ENCODE measurements at regions of chr11 and their contacts with region 1.

Region 1: DNA sequence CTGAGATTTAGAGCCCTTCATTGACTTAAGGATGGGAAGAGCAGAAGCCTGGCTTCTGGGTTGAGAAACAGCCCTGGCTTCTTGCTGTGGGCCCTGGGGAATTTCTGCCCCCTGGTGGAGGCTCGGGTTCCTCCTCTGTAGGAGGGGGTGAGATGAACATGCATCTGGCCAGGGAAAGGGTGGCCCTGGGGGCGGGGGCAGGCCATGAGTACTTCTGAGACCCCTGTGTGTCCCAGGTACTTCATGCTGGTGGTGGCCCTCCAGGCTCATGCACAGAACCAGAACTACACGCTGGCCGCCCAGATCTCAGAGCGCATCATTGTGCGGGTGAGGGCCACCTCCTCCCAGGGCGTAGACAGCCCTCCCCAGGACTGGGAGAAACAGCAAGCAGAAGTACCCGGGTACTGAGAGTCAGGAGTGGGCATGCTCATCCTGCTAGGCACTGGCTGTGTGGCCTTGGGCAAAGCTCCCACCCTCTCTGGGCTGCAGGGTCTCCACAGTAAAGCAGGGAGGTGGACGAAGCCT is 15.8 kb downstream of the TMEM258 start:
- DNase-seq: peak in 8 of 9 donors; percentile 27 to 71 (median 37)
- ATAC-seq: peak; percentile 66
- H3K4me3 ChIP-seq: peak overlapping the region; percentile 44
- H3K4me3 Mint-ChIP-seq: peak overlapping the region in 9 of 10 donors; percentile 34 to 77 (median 68)
- H3K27ac ChIP-seq: no peak overlapping the region
- H3K27ac Mint-ChIP-seq: peak overlapping the region in 2 of 9 donors; percentile 43 to 80
- H3K4me1 ChIP-seq: peaks cover 4 to 11% of the 10 kb centered on the region in 2 donors
- H3K4me1 Mint-ChIP-seq: peaks cover 5 to 21% (median 10%) of the 10 kb centered on the region in 7 donors
- H3K27me3 ChIP-seq: no peaks in the 10 kb centered on the region
- H3K27me3 Mint-ChIP-seq: peaks cover 0 to 6% (median 0%) of the 10 kb centered on the region in 5 donors

Region 2: GRCh38 chr11:61309739-61310138 is 466.9 kb before region 1 on chr11:
- CTCF ChIA-PET with region 1: no interaction called
- POLR2A ChIA-PET with region 1: no interaction called
- intact Hi-C with region 1: no loop called
- DNase-seq: no peak
- ATAC-seq: no peak
- H3K4me3 ChIP-seq: no peak overlapping the region
- H3K4me3 Mint-ChIP-seq: no peak overlapping the region
- H3K27ac ChIP-seq: no peak overlapping the region
- H3K27ac Mint-ChIP-seq: no peak overlapping the region
- H3K4me1 ChIP-seq: no peaks in the 10 kb centered on the region
- H3K4me1 Mint-ChIP-seq: peaks cover 0 to 2% (median 0%) of the 10 kb centered on the region in 7 donors
- H3K27me3 ChIP-seq: no peaks in the 10 kb centered on the region
- H3K27me3 Mint-ChIP-seq: no peaks in the 10 kb centered on the region

Region 3: GRCh38 chr11:61679893-61680621 is 96.6 kb before region 1 on chr11 and contains the start of gene DAGLA:
- CTCF ChIA-PET with region 1: no interaction called
- POLR2A ChIA-PET with region 1: no interaction called
- intact Hi-C with region 1: no loop called
- DNase-seq: peak; percentile 60 to 91 (median 74)
- ATAC-seq: peak; percentile 89
- H3K4me3 ChIP-seq: no peak within 1 kb of the TSS
- H3K4me3 Mint-ChIP-seq: peak within 1 kb of the TSS in 9 of 10 donors; percentile 38 to 77 (median 67)
- H3K27ac ChIP-seq: no peak within 1 kb of the TSS
- H3K27ac Mint-ChIP-seq: peak within 1 kb of the TSS in 4 of 9 donors; percentile 43 to 65 (median 55)
- H3K4me1 ChIP-seq: peaks cover 14 to 16% of the 10 kb centered on the region in 2 donors
- H3K4me1 Mint-ChIP-seq: peaks cover 0 to 9% (median 5%) of the 10 kb centered on the region in 7 donors
- H3K27me3 ChIP-seq: peaks cover 0 to 3% of the 10 kb centered on the region in 2 donors
- H3K27me3 Mint-ChIP-seq: peaks cover 2 to 27% (median 21%) of the 10 kb centered on the region in 5 donors
- total RNA-seq, gene DAGLA: 0.15 to 2.1 (median 0.35) TPM

Region 4: GRCh38 chr11:61747192-61747966 is 29.2 kb before region 1 on chr11:
- CTCF ChIA-PET with region 1: no interaction called
- POLR2A ChIA-PET with region 1: no interaction called
- intact Hi-C with region 1: loop called (anchors 1 to 2 kb)
- DNase-seq: peak in 5 of 9 donors; percentile 13 to 67 (median 18)
- ATAC-seq: peak; percentile 65
- H3K4me3 ChIP-seq: no peak overlapping the region
- H3K4me3 Mint-ChIP-seq: no peak overlapping the region
- H3K27ac ChIP-seq: no peak overlapping the region
- H3K27ac Mint-ChIP-seq: no peak overlapping the region
- H3K4me1 ChIP-seq: no peaks in the 10 kb centered on the region
- H3K4me1 Mint-ChIP-seq: peaks cover 0 to 10% (median 6%) of the 10 kb centered on the region in 7 donors
- H3K27me3 ChIP-seq: peaks cover 0 to 3% of the 10 kb centered on the region in 2 donors
- H3K27me3 Mint-ChIP-seq: peaks cover 17 to 22% (median 20%) of the 10 kb centered on the region in 5 donors

Region 5: DNA sequence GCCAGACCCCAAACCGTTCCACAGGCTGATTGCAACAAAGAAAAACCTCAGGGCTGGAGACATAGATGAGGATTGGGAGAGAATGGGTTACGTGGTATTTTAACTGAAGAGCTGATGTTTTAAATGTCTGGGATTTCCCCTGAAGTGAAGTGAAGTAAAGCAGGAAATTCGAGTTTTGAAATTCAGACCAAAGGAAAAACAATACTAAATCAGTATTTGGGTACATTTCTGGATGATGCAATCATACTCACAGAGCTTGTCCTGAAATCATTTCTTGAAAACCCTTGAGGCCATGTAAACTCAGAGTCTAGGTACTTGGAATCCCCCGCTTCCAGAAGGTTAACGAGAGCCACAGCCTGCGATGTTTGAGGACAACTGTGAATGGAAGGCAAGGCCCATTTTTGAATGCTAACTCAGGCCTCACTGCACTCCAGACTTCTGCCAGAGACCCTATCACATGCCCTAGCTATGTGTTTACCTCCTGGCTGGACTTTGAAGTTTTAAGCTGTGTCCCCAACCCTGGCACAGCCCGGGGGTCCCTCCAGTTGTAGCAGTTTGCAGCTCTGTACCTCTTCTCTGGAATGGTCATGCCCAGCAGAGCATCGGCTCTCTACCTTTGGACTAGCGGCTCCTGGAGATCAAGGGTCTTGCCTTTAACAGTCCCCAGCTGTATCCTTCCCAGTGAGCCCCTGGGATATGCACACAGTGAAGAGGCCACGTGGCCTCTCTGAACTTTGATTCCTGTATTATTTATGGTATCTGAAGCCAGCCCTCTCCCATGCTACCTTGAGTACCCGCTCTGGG is 196.3 kb after region 1 on chr11:
- CTCF ChIA-PET with region 1: no interaction called
- POLR2A ChIA-PET with region 1: no interaction called
- intact Hi-C with region 1: no loop called
- DNase-seq: peak in 3 of 9 donors; percentile 24 to 52 (median 28)
- ATAC-seq: peak; percentile 33
- H3K4me3 ChIP-seq: no peak overlapping the region
- H3K4me3 Mint-ChIP-seq: peak overlapping the region in 5 of 10 donors; percentile 21 to 70 (median 38)
- H3K27ac ChIP-seq: peak overlapping the region; percentile 57
- H3K27ac Mint-ChIP-seq: peak overlapping the region; percentile 17 to 89 (median 80)
- H3K4me1 ChIP-seq: peaks cover 0 to 18% of the 10 kb centered on the region in 2 donors
- H3K4me1 Mint-ChIP-seq: peaks cover 25 to 54% (median 44%) of the 10 kb centered on the region in 7 donors
- H3K27me3 ChIP-seq: no peaks in the 10 kb centered on the region
- H3K27me3 Mint-ChIP-seq: no peaks in the 10 kb centered on the region

Region 6: DNA sequence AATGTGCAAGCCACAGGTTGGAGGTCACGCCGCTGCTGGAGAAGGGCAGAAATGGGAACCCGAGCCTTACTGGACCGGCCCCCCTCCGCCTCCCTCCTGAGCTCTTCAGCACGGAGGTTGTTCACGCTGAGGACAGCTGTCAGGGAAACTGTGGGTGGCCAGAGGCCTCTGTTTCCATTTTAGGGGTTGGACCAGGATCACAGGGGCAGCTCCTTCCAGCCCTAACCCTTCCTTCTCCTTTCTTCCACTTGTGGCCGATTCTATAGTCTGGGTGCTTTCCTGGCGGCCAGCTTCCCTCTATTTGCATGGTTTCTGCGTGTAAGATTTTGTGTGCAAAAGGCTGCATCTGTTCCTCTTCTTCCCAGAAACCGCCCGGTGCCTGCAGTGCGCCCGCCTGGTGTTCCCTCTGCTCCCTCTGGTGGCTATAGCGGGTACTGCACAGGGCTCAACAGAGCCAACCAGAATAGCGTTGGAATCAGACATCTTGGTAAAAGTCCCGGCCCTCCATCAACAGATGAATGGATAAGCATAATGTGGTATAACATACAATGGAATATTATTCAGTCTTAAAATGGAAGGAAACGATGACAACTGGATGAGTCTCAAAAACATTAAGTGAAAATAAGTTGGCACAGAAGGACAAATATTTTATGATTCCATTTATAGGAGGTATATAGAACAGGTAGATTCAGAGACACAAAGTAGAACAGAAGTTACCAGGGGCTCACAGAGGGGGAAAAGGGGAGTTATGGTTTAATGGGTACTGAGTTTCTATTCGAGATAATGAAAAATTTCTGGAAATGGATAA is 1247.4 kb after region 1 on chr11:
- CTCF ChIA-PET with region 1: no interaction called
- POLR2A ChIA-PET with region 1: no interaction called
- intact Hi-C with region 1: no loop called
- DNase-seq: peak; percentile 51 to 86 (median 72)
- ATAC-seq: peak; percentile 98
- H3K4me3 ChIP-seq: no peak overlapping the region
- H3K4me3 Mint-ChIP-seq: peak overlapping the region in 1 of 10 donors; percentile 12
- H3K27ac ChIP-seq: no peak overlapping the region
- H3K27ac Mint-ChIP-seq: no peak overlapping the region
- H3K4me1 ChIP-seq: no peaks in the 10 kb centered on the region
- H3K4me1 Mint-ChIP-seq: peaks cover 0 to 6% (median 4%) of the 10 kb centered on the region in 7 donors
- H3K27me3 ChIP-seq: no peaks in the 10 kb centered on the region
- H3K27me3 Mint-ChIP-seq: peaks cover 5 to 28% (median 19%) of the 10 kb centered on the region in 5 donors